Common myeloid progenitor, CD34-positive (primary cell): ENCODE measurements at regions of chr5 and their contacts with region 1.

Region 1: DNA sequence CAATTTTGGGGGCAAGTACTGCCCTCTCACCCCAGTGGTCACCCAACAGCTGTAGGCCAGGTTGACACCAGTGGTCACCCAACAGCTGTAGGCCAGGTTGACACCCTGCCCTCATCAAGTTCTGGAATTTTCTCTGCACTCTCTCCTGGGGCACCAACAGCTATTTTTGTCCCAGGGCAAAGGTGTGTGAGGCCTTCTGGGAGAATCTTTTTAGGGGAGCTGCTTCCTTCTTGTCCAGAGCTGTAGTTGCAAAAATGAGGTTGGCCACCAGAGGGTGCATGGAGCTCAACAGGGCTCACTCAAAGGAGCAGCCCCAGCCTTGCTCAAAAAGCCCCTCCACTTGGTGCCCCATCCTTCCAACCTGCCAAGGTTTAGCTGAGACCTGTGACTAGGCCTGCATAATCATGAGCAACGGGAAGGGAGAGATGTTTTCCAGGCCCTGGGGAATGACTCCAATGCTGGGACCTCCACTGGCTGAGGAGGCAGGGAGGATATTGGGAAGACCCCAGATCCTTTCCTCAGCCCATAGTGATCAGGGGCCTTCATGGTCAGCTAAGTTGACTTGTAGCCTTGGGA is 10.6 kb upstream of the P4HA2 start:
- DNase-seq: peak; percentile 71 to 89 (median 81)
- H3K4me3 ChIP-seq: no peak overlapping the region
- H3K27ac ChIP-seq: no peak overlapping the region
- H3K4me1 ChIP-seq: no peaks in the 10 kb centered on the region
- H3K27me3 ChIP-seq: no peaks in the 10 kb centered on the region

Region 2: GRCh38 chr5:132086277-132086794 is 151.9 kb before region 1 on chr5:
- CTCF ChIA-PET with region 1: no interaction called
- POLR2A ChIA-PET with region 1: no interaction called
- DNase-seq: no peak
- H3K4me3 ChIP-seq: no peak overlapping the region
- H3K27ac ChIP-seq: no peak overlapping the region
- H3K4me1 ChIP-seq: peaks cover 0 to 24% (median 4%) of the 10 kb centered on the region in 4 experiments
- H3K27me3 ChIP-seq: peaks cover 0 to 2% (median 0%) of the 10 kb centered on the region in 5 experiments

Region 3: DNA sequence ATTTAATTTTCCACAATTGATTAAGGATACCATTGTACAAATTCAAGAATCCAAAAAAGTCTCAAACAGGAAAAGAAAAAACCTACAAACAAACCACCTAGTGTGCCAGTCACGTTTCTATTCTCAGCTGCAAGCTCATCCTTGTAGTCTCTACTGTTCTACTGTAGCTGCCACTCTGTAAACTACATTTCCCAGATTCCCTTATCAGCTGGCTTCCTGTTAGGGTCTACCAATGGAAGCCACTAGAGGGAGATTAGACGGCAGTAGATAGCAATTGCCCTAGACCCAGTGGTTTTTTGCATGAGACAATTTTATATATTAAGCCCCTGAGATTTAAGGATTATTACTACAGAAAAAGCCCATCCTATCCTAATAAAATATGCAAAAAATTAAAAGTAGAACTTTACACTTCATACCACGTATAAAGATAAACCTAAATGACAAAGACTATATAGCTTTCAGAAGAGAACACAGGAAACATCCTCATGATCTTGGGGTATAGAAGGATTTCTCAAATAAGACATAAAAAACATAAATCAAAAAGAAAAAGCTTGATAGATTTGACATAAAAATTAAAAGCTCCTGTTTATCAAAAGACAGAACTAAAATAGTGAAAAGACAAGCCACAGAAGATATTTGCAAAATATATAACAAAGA is 48.0 kb before region 1 on chr5:
- CTCF ChIA-PET with region 1: interaction called, 14 read pairs
- POLR2A ChIA-PET with region 1: no interaction called
- DNase-seq: peak; percentile 67 to 82 (median 81)
- H3K4me3 ChIP-seq: no peak overlapping the region
- H3K27ac ChIP-seq: no peak overlapping the region
- H3K4me1 ChIP-seq: no peaks in the 10 kb centered on the region
- H3K27me3 ChIP-seq: no peaks in the 10 kb centered on the region

Region 4: DNA sequence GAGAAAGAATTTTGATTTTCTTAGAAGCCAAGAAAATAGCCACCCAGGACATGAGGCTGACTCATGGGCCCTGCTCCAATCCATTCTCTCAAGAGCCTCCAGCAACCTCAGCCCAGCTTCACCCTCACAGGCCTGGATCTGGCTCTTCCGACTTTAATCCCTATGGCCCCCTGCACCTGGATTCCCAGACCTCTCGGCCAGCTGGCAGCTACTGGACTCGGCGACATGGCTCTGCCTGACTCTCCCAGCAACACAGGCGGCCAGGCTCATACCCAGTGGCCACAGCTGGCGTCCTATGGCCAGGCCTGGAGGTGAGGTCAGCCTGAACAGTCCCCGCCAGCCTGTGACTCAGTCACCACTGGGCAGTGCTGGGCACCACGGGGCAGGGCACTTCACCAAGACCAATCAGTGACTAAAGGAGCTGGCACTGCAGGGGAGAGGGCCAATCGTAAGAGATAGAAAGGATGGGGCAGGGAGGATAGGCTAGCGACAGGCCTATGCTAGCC is 13.0 kb after region 1 on chr5:
- CTCF ChIA-PET with region 1: interaction called, 56 read pairs
- POLR2A ChIA-PET with region 1: interaction called, 4 read pairs
- DNase-seq: no peak
- H3K4me3 ChIP-seq: no peak overlapping the region
- H3K27ac ChIP-seq: no peak overlapping the region
- H3K4me1 ChIP-seq: peaks cover 0 to 3% (median 0%) of the 10 kb centered on the region in 4 experiments
- H3K27me3 ChIP-seq: peaks cover 0 to 7% (median 0%) of the 10 kb centered on the region in 5 experiments

Region 5: DNA sequence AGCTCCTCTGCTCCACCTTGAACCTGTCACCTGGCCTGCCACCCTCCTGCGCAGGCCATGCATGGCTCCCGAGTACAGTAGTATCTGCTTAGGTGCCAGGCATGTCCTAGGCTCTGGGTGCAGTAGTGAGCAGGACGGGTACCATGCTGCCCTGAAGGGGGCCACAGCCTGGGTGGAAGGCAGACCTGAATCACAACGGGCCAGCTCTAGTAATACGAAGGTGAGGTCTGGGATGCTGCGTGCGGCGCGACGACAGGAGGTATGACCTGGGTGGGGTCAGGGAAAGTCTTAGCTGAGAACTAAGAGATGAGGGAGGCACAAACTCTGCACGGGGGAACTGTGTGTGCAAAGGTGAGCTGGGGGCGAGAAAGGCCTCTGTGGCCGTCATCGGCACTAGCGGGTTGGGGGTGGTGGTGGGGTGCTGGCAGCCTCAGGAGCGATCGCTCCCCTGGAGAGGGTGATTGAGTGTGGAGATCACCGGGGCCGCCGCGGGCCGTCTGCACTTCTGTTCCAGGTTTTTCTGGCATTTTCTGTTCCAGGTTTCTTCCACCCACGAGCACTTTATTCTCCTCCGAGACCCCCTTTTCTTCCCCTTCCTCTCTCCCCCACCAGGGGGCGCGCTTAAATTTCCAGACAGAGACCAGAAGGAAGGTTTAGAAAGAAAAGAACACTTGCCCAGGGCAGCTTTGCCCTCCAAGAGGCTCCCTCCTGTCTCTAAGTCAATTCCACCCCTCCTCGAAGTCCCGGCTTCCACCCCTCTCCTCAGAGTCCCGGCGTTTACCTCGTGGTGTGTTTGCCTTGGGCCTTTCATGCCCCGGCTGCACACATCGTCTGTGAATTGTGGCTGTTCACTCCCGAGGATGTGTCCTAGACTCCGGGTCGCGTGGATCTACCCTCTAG is 34.3 kb after region 1 on chr5:
- CTCF ChIA-PET with region 1: interaction called, 27 read pairs
- POLR2A ChIA-PET with region 1: no interaction called
- DNase-seq: peak; percentile 68 to 80 (median 74)
- H3K4me3 ChIP-seq: peak overlapping the region in 1 of 7 experiments; percentile 47
- H3K27ac ChIP-seq: no peak overlapping the region
- H3K4me1 ChIP-seq: peaks cover 0 to 6% (median 4%) of the 10 kb centered on the region in 4 experiments
- H3K27me3 ChIP-seq: peaks cover 0 to 4% (median 0%) of the 10 kb centered on the region in 5 experiments

Region 6: DNA sequence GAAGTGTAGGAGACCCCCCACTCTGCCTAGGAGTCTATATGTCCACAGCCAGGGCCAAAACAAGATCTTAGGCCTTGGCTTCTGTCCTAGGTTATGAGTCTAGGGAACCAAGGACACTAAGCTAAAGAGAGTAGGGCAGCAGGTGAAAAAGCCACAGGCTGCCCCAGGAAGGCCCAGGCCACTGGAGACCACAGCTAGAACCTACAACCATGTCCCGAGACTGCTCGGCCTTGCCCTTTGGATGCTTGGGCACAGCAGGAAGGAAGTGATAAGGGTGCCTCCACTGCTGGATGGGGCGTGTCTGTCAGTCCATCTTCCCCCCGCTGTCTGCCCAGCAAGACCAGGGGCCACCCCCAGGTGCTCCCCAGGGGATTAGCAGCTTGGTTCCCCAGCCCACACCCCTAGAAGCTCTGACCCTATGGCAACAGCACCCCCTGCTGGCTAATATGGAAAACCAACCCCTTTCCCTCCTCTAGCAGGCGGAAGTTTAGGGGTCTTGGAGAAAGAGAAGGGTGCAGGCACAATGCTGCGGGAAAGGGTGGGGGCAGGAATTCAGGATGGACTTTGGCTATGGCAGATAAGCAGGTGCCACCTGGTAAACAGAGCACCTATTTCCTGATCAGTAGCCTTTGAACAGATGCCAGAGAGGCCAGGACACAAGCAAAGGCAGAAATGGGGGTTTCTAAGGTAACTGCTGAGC is 262.8 kb after region 1 on chr5:
- CTCF ChIA-PET with region 1: interaction called, 14 read pairs
- POLR2A ChIA-PET with region 1: no interaction called
- DNase-seq: peak; percentile 82 to 91 (median 91)
- H3K4me3 ChIP-seq: no peak overlapping the region
- H3K27ac ChIP-seq: peak overlapping the region in 1 of 2 experiments; percentile 35
- H3K4me1 ChIP-seq: peaks cover 0 to 40% (median 29%) of the 10 kb centered on the region in 4 experiments
- H3K27me3 ChIP-seq: no peaks in the 10 kb centered on the region